ENCODE measurements at regions of chr11 and their contacts with region 1.

Region 1: DNA sequence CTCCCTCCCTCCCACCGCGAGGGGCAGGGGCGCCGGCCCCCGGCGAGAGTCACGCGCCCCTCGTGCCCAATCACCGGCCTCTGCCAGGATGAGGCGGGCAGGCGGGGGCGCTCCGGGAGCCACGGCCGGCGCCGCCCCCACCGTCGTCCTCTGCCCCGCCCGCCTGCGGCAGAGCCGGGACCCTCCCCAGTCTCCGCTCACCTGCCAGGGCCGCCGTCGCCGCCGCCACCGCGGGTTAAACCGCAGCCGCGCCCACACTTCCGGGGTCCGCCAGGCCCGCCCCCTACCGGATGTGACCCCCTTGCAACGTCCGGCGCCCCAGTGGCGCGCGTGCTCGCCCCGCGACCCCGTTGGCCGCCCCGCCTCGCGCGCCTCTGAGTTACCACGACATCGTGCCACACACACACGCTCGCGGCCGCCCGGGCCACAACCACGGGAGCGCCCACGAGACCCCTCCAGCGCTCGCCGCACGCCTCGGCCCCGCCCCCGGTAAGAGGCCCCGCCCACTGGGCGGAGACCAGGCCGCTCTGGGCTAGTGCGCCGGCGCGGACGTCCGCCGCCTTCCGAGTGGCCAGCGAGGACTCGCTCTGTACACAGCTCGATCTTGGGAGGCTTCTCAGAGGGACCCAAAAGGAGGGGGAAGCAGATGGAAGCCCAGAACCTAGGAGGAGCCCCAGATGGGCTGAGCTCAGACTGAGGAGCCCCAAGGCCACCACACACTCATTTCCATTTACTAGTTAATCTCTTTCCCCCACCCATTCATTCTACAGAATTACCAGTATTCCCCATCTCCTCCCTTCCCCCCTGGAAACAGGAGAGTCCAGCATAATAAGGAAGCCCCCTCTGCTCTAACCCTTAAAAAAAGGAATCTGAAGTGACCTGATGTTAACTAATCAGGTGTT is at the start of gene VPS37C:
- DNase-seq: peak; percentile 96
- ATAC-seq: peak; percentile 81
- H3K4me3 Mint-ChIP-seq: peak within 1 kb of the TSS; percentile 91
- H3K27ac Mint-ChIP-seq: peak within 1 kb of the TSS; percentile 95
- H3K4me1 Mint-ChIP-seq: peaks cover 62% of the 10 kb centered on the region
- H3K27me3 Mint-ChIP-seq: no peaks in the 10 kb centered on the region
- total RNA-seq, gene VPS37C: 9.5 to 10.6 TPM

Region 2: DNA sequence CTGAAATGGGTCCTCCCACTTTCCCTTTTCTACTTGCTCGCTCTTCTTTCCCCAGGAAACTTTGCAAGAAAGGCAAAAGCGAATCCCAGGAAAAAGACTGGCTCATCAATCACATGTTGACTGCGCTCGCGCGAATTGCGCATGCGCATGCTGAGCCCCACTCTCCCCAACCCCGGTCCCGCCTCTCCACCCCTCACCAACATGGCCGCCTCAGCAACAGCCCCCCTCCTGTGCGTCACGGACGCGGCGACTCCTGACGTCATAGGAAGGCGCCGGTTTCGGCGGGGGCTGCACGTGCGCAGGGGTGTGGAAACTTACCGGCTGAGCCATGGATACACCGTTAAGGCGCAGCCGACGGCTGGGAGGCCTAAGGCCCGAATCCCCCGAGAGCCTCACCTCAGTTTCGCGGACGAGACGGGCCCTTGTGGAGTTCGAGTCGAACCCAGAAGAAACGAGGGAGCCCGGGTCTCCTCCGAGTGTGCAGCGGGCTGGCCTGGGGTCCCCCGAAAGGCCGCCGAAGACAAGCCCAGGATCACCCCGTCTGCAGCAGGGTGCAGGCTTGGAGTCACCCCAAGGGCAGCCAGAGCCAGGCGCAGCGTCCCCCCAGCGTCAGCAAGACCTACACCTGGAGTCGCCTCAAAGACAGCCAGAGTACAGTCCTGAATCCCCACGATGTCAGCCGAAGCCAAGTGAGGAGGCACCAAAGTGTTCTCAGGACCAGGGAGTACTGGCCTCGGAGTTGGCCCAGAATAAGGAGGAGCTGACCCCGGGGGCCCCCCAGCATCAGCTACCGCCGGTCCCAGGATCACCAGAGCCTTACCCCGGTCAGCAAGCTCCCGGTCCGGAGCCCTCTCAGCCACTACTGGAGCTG is 319.4 kb before region 1 on chr11 and contains the start of gene CCDC86:
- CTCF ChIA-PET with region 1: no interaction called
- POLR2A ChIA-PET with region 1: no interaction called
- intact Hi-C with region 1: loop called in 1 of 2 experiments (anchors 1 kb)
- DNase-seq: peak; percentile 98
- ATAC-seq: peak; percentile 95
- H3K4me3 Mint-ChIP-seq: peak within 1 kb of the TSS; percentile 83
- H3K27ac Mint-ChIP-seq: peak within 1 kb of the TSS; percentile 96
- H3K4me1 Mint-ChIP-seq: peaks cover 38% of the 10 kb centered on the region
- H3K27me3 Mint-ChIP-seq: no peaks in the 10 kb centered on the region
- total RNA-seq, gene CCDC86: 52.1 to 75.1 TPM

Region 3: GRCh38 chr11:60970369-60970774 is 191.1 kb before region 1 on chr11:
- CTCF ChIA-PET with region 1: no interaction called
- POLR2A ChIA-PET with region 1: no interaction called
- intact Hi-C with region 1: loop called in 1 of 2 experiments (anchors 1 kb)
- DNase-seq: peak; percentile 91
- ATAC-seq: peak; percentile 51
- H3K4me3 Mint-ChIP-seq: peak overlapping the region; percentile 87
- H3K27ac Mint-ChIP-seq: peak overlapping the region; percentile 98
- H3K4me1 Mint-ChIP-seq: peaks cover 16% of the 10 kb centered on the region
- H3K27me3 Mint-ChIP-seq: peaks cover 2% of the 10 kb centered on the region

Region 4: GRCh38 chr11:61041755-61042518 is 119.5 kb before region 1 on chr11:
- CTCF ChIA-PET with region 1: no interaction called
- POLR2A ChIA-PET with region 1: no interaction called
- intact Hi-C with region 1: loop called in 1 of 2 experiments (anchors 1 kb)
- DNase-seq: peak; percentile 92
- ATAC-seq: peak; percentile 94
- H3K4me3 Mint-ChIP-seq: peak overlapping the region; percentile 64
- H3K27ac Mint-ChIP-seq: peak overlapping the region; percentile 91
- H3K4me1 Mint-ChIP-seq: peaks cover 72% of the 10 kb centered on the region
- H3K27me3 Mint-ChIP-seq: no peaks in the 10 kb centered on the region

Region 5: GRCh38 chr11:61129639-61130523 is 31.6 kb before region 1 on chr11:
- CTCF ChIA-PET with region 1: interaction called, 5 read pairs
- POLR2A ChIA-PET with region 1: no interaction called
- intact Hi-C with region 1: loop called in 1 of 2 experiments (anchors 1 kb)
- DNase-seq: peak; percentile 97
- ATAC-seq: peak; percentile 89
- H3K4me3 Mint-ChIP-seq: peak overlapping the region; percentile 14
- H3K27ac Mint-ChIP-seq: peak overlapping the region; percentile 64
- H3K4me1 Mint-ChIP-seq: peaks cover 27% of the 10 kb centered on the region
- H3K27me3 Mint-ChIP-seq: no peaks in the 10 kb centered on the region

Region 6: GRCh38 chr11:61361686-61362541 is 200.5 kb after region 1 on chr11 and contains the starts of genes CYB561A3 and TMEM138:
- CTCF ChIA-PET with region 1: no interaction called
- POLR2A ChIA-PET with region 1: no interaction called
- intact Hi-C with region 1: loop called in 1 of 2 experiments (anchors 1 kb)
- DNase-seq: peak; percentile 95
- ATAC-seq: peak; percentile 96
- H3K4me3 Mint-ChIP-seq: peak within 1 kb of the TSS; percentile 100
- H3K27ac Mint-ChIP-seq: peak within 1 kb of the TSS; percentile 100
- H3K4me1 Mint-ChIP-seq: peaks cover 34% of the 10 kb centered on the region
- H3K27me3 Mint-ChIP-seq: no peaks in the 10 kb centered on the region
- total RNA-seq, gene CYB561A3: 31.8 to 34.4 TPM
- total RNA-seq, gene TMEM138: 38.6 to 56.5 TPM

Region 7: DNA sequence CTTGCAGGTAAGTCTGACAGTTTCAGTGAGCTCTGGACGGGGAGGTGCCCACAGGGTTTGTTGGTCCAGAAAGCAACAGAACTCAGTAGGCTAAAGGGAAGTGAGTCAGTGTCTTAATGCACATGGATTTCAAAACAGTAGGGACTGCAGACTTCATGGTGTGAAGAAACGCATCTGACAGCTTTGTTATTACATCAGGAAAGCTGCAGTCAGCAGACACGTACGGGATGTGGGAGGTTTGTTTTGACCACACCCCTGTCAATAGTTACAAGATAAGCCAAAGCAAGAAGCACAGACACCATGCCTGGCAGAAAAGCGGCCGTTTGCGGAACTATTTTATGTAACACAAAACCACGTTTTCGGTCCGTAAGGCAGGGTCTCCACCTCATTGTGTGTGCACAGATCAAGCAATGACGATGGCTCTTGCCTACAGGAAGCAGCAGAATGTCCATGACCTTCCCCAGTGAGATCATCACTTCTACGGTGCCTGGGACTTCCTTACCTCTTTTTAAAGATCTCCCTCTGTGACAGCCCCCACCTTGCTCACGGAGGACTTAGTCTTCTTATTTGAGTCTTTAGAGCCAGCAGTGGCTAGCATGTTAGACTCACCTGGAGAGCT is 864.2 kb after region 1 on chr11:
- CTCF ChIA-PET with region 1: no interaction called
- POLR2A ChIA-PET with region 1: no interaction called
- intact Hi-C with region 1: loop called in 1 of 2 experiments (anchors 10 kb)
- DNase-seq: peak; percentile 81
- ATAC-seq: peak; percentile 90
- H3K4me3 Mint-ChIP-seq: peak overlapping the region; percentile 15
- H3K27ac Mint-ChIP-seq: peak overlapping the region; percentile 88
- H3K4me1 Mint-ChIP-seq: peaks cover 17% of the 10 kb centered on the region
- H3K27me3 Mint-ChIP-seq: no peaks in the 10 kb centered on the region